Activated B cell treated with CpG ODN at 0.5 μM for 24 hours (primary cell): ENCODE measurements at regions of chr4 and their contacts with region 1.

Region 1: DNA sequence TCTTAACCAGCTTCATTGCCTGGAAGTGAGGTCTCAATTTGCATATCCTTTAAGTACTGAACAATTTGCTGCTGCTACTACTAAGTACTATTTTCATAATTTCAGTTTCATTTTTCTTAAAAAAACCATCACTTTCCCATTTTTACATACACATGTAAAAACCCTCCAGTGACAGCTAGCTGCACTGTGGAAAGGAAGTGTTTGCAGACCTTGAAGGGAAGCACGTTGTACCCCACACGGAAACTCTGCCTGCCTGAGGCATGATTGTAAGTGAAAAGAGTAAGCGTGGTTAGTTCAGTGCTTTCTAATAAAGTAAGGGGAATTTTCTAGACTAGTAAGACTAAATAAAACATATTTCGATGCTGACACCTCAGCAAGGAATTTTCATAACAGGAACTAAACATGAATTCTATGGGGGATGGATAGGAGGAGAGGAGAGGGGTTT is 103.6 kb downstream of the RAPGEF2 start:
- DNase-seq: no peak
- ATAC-seq: peak; percentile 65
- H3K4me3 Mint-ChIP-seq: peak overlapping the region; percentile 46
- H3K27ac Mint-ChIP-seq: peak overlapping the region; percentile 8
- H3K4me1 Mint-ChIP-seq: peaks cover 20% of the 10 kb centered on the region
- H3K27me3 Mint-ChIP-seq: no peaks in the 10 kb centered on the region
- CTCF ChIP-seq: no peak

Region 2: GRCh38 chr4:158253350-158253980 is 953.0 kb before region 1 on chr4:
- CTCF ChIA-PET with region 1: interaction called, 3 read pairs
- POLR2A ChIA-PET with region 1: no interaction called
- intact Hi-C with region 1: loop called (anchors 1 kb)
- DNase-seq: no peak
- ATAC-seq: peak; percentile 42
- H3K4me3 Mint-ChIP-seq: no peak overlapping the region
- H3K27ac Mint-ChIP-seq: no peak overlapping the region
- H3K4me1 Mint-ChIP-seq: peaks cover 5% of the 10 kb centered on the region
- H3K27me3 Mint-ChIP-seq: peaks cover 12% of the 10 kb centered on the region
- CTCF ChIP-seq: no peak

Region 3: DNA sequence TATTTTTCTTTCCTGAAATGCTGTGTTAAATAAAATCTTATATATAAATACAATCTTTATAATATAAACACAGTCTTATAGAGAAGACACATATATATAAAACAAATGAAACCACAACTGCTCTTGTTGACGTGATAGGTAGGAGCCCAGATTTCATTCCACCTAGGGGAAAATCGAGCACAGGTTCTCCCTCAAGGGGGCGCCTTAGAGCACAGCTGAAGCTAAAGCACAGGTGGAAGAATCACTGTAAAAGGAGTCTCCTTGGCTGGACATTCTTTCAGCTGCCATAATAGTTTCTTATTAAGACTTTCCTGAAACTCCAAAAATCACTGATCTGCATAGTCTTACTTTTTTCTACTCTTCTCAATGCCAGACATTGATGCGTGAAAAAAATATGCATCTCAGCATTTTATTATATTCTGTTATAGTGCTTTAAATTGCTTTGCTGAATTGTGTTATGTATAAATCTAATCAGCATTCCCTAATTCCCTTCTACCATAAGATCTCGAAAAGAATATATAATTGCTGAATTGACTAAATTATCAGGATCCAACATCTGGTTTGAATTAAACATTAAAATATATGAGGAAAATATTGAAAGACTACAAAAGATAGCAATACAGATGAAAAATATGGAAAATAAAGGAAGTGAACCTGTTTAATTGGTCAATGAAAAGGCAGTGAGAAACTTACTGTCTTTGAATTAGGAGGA is 710.3 kb before region 1 on chr4:
- CTCF ChIA-PET with region 1: interaction called, 3 read pairs
- POLR2A ChIA-PET with region 1: no interaction called
- intact Hi-C with region 1: loop called (anchors 10 kb)
- DNase-seq: no peak
- ATAC-seq: no peak
- H3K4me3 Mint-ChIP-seq: no peak overlapping the region
- H3K27ac Mint-ChIP-seq: no peak overlapping the region
- H3K4me1 Mint-ChIP-seq: no peaks in the 10 kb centered on the region
- H3K27me3 Mint-ChIP-seq: no peaks in the 10 kb centered on the region
- CTCF ChIP-seq: no peak

Region 4: DNA sequence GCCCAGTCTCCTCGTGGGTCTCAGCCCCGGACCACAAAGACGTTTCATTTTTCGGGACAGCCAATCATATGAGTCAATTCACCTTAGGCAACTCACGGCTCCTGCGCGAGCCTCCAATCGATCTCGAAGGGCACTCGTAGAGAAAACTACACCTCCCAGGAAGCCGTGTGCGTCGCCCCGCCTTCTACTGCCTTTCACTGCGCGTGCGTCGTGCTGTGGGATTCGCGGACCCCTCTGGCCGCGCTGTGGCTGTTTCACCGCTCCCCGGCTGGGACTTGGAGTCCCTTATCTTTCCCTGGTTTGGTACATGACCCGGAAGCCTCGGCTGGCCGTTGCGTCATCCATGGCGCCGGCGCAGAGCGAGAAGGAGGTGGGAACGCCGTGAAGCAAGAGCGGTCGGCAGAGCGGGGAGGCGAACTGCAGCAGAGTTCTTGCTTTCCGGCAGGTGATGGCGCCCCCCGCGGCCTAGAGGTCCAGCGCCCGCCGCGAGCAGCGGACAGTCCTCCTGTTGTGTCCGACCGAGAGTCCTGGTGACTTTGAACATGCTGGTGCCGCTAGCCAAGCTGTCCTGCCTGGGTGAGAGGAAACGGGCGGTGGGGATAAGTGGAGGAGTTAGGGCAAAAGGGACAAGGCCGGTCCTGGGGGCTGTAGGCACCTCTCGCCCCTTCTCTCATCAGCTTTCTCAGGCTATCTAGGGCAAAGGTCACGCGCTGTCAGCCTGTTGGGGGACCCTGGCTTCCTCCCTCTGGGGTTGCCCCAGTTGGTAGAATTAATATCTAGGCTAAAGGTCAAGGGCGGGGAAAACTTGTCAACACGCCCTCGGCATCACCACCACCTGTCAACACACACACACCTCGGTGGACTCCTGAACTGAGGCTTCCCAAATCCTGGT is 534.3 kb before region 1 on chr4 and contains the start of gene ETFDH:
- CTCF ChIA-PET with region 1: no interaction called
- POLR2A ChIA-PET with region 1: no interaction called
- intact Hi-C with region 1: loop called (anchors 1 kb)
- DNase-seq: peak; percentile 95
- ATAC-seq: peak; percentile 83
- H3K4me3 Mint-ChIP-seq: peak within 1 kb of the TSS; percentile 98
- H3K27ac Mint-ChIP-seq: peak within 1 kb of the TSS; percentile 96
- H3K4me1 Mint-ChIP-seq: peaks cover 23% of the 10 kb centered on the region
- H3K27me3 Mint-ChIP-seq: no peaks in the 10 kb centered on the region
- CTCF ChIP-seq: no peak
- total RNA-seq, gene ETFDH: 12.0 and 15.4 TPM in 2 replicates

Region 5: DNA sequence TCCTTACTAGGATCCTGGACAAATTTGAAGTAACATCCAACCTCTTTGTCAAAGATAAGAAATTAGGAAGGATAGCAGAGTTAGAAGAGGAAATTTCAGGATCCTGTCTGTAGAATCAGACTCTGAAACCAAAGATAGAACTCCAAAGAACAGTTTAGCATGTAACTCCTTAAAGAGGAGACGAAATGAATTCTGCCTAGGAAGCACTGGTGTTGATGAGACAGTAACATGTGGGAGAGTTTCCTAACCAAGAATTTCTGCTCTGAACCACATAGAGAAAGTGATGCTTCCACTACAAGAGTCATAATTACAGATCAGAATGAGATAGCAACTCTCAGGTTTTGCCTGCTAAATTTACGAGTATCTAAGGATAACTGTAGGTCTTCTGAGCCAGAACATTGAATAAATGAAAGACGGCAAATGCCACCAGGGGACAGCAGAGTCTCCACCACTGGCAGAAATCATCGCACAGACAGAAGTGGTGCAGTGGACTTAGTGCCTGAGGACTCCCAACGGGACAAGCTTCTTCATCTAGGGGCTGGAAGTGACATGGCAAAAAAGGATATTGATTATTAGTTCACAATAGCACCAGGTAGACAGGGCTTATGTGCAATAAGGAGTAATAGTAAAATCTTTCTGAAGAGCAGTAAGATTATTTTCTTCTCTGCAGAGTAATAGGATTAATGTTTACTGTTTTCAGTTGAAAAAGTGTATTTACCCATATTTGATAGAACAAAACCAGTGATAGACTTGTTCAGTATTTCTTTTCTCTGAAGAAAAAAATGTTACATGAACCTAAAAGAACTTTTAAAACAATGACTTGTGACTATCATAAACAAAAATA is 476.5 kb before region 1 on chr4:
- CTCF ChIA-PET with region 1: interaction called, 3 read pairs
- POLR2A ChIA-PET with region 1: no interaction called
- intact Hi-C with region 1: loop called (anchors 1 kb)
- DNase-seq: no peak
- ATAC-seq: peak; percentile 40
- H3K4me3 Mint-ChIP-seq: no peak overlapping the region
- H3K27ac Mint-ChIP-seq: no peak overlapping the region
- H3K4me1 Mint-ChIP-seq: no peaks in the 10 kb centered on the region
- H3K27me3 Mint-ChIP-seq: peaks cover 37% of the 10 kb centered on the region
- CTCF ChIP-seq: no peak

Region 6: DNA sequence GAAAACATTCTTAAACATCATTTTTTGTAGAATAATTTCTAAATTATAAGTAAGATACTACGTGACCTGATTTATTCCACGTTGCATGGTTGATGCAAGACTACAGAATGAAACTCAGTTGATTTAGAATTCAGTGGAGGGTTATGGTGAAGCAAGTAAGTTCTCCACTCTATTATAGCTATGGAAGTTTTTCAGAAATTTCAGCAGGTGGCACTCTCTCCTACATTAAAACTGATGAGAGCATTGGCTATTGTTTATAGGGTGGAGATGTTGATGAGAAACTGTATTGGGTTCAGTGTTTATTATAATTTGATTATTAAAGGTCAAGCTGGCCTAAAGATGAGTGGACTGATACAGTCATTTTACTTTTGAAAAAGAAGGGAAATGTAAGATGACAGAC is 349.6 kb before region 1 on chr4:
- CTCF ChIA-PET with region 1: interaction called, 67 read pairs
- POLR2A ChIA-PET with region 1: no interaction called
- intact Hi-C with region 1: loop called (anchors 1 kb)
- DNase-seq: no peak
- ATAC-seq: peak; percentile 72
- H3K4me3 Mint-ChIP-seq: no peak overlapping the region
- H3K27ac Mint-ChIP-seq: no peak overlapping the region
- H3K4me1 Mint-ChIP-seq: peaks cover 3% of the 10 kb centered on the region
- H3K27me3 Mint-ChIP-seq: peaks cover 20% of the 10 kb centered on the region
- CTCF ChIP-seq: peak; percentile 66